Psoas muscle (tissue), 8 donors: ENCODE measurements at regions of chr2 and their contacts with region 1.

Region 1: GRCh38 chr2:175167792-175168563 is at the start of gene ATF2:
- DNase-seq: peak; percentile 98 to 99
- ATAC-seq: peak; percentile 96 to 98 (median 98)
- H3K4me3 ChIP-seq: peak within 1 kb of the TSS; percentile 81
- H3K27ac ChIP-seq: peak within 1 kb of the TSS; percentile 90
- H3K4me1 ChIP-seq: peaks cover 20% of the 10 kb centered on the region
- H3K27me3 ChIP-seq: no peaks in the 10 kb centered on the region
- CTCF ChIP-seq: no peak
- total RNA-seq, gene ATF2: 18.7 to 22.3 (median 20.2) TPM

Region 2: DNA sequence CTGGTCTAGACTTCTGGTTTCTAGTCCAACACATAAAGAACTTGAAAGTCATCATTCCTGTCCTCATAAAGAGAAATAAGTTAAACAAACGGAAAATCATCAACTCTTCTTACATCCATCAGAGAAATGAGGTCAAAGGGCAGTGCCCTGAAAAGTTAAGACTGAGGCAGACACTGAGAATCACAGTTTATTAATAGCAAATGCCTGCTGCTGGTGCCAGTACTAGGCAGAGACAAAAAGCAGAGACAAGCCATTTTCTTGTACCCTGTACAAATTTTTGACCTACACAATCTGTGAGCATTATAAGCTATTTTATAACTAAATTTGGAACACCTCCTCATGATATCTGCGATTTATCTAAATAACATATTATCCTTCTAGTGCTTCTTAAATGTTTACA is 36.7 kb before region 1 on chr2:
- intact Hi-C with region 1: loop called in 1 of 2 experiments (anchors 5 kb)
- DNase-seq: no peak
- ATAC-seq: peak; percentile 65 to 91 (median 77)
- H3K4me3 ChIP-seq: no peak overlapping the region
- H3K27ac ChIP-seq: no peak overlapping the region
- H3K4me1 ChIP-seq: peaks cover 13% of the 10 kb centered on the region
- H3K27me3 ChIP-seq: no peaks in the 10 kb centered on the region
- CTCF ChIP-seq: no peak

Region 3: DNA sequence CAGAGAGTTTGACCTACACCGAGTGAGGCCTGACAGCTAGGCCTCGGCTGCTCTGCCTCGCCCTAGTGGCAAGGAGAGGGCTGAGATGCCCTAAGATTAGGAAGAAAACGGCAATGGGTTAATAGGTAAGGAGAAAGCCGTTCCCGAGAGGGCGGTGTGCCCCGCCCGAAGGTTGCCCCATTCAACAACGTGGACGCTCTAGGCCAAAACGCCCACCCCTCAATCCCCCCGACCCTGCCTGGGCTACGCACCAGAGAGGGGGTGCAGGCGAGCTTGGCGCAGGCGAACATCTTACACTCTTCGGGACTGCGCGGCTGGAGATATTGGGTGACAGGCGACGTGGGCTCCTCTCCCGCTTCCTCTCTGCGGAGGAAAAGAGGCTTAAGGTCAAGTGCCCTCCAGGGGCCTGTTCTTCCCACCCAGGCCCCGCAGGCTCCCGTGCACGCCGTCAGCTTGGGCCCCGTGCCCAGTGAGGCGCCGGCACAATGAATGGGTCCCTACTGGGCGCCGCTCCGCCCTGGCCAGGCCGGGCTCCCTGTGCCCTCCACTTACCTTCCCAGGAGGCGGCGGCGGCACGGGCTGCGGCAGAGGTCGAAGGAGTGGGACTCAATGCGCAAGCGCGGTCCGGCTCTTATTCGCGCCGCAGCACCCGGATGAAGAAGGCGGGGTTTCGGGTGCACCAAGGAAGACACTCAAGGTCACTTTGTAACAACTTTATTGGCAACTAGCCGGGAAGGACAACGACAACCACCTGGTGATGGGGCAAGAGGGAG is 13.3 kb after region 1 on chr2 and contains the start of gene ATP5MC3:
- intact Hi-C with region 1: no loop called
- DNase-seq: peak; percentile 93 to 96
- ATAC-seq: peak; percentile 97 to 98 (median 98)
- H3K4me3 ChIP-seq: peak within 1 kb of the TSS; percentile 96
- H3K27ac ChIP-seq: peak within 1 kb of the TSS; percentile 87
- H3K4me1 ChIP-seq: peaks cover 25% of the 10 kb centered on the region
- H3K27me3 ChIP-seq: no peaks in the 10 kb centered on the region
- CTCF ChIP-seq: peak; percentile 4
- total RNA-seq, gene ATP5MC3: 277 to 690 (median 351) TPM